ENCODE measurements at regions of chr2 and their contacts with region 1.

Region 1: GRCh38 chr2:24297663-24298062 is 62.7 kb downstream of the ITSN2 start:
- DNase-seq: no peak
- ATAC-seq: no peak
- H3K4me3 ChIP-seq: no peak overlapping the region
- H3K4me3 Mint-ChIP-seq: no peak overlapping the region
- H3K27ac ChIP-seq: no peak overlapping the region
- H3K27ac Mint-ChIP-seq: no peak overlapping the region
- H3K4me1 ChIP-seq: no peaks in the 10 kb centered on the region
- H3K4me1 Mint-ChIP-seq: no peaks in the 10 kb centered on the region
- H3K27me3 ChIP-seq: no peaks in the 10 kb centered on the region
- H3K27me3 Mint-ChIP-seq: no peaks in the 10 kb centered on the region
- CTCF ChIP-seq: no peak

Region 2: GRCh38 chr2:24262421-24262970 is 35.2 kb before region 1 on chr2:
- CTCF ChIA-PET with region 1: interaction called, 3 read pairs
- POLR2A ChIA-PET with region 1: no interaction called
- intact Hi-C with region 1: loop called (anchors 5 kb)
- DNase-seq: no peak
- ATAC-seq: no peak
- H3K4me3 ChIP-seq: no peak overlapping the region
- H3K4me3 Mint-ChIP-seq: no peak overlapping the region
- H3K27ac ChIP-seq: peak overlapping the region in 1 of 2 donors; percentile 61
- H3K27ac Mint-ChIP-seq: peak overlapping the region; percentile 38
- H3K4me1 ChIP-seq: no peaks in the 10 kb centered on the region
- H3K4me1 Mint-ChIP-seq: peaks cover 14% of the 10 kb centered on the region
- H3K27me3 ChIP-seq: no peaks in the 10 kb centered on the region
- H3K27me3 Mint-ChIP-seq: no peaks in the 10 kb centered on the region
- CTCF ChIP-seq: no peak

Region 3: DNA sequence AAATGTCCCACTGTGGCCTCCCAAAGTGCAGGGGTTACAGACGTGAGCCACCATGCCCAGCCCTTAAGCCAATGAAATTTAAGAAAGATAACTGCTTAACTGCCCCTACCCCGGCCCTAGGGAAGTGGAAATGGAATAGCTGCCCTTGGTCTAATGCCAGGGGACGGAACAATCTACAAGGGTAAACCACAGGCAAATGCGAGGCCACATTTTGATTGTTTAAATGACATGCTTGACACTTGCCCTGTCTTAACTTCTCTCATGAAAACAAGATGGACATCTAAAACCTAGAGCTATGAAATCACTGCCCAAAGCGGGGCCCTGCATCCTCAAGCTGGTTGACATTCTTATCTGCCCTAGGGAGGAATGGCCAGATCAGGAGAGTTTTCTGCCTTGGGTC is 68.2 kb after region 1 on chr2:
- CTCF ChIA-PET with region 1: no interaction called
- POLR2A ChIA-PET with region 1: no interaction called
- intact Hi-C with region 1: no loop called
- DNase-seq: no peak
- ATAC-seq: no peak
- H3K4me3 ChIP-seq: no peak overlapping the region
- H3K4me3 Mint-ChIP-seq: no peak overlapping the region
- H3K27ac ChIP-seq: peak overlapping the region in 1 of 2 donors; percentile 78
- H3K27ac Mint-ChIP-seq: peak overlapping the region; percentile 77
- H3K4me1 ChIP-seq: peaks cover 13 to 24% of the 10 kb centered on the region in 2 donors
- H3K4me1 Mint-ChIP-seq: peaks cover 31% of the 10 kb centered on the region
- H3K27me3 ChIP-seq: no peaks in the 10 kb centered on the region
- H3K27me3 Mint-ChIP-seq: no peaks in the 10 kb centered on the region
- CTCF ChIP-seq: no peak

Measured in B cell (primary cell).